ENCODE measurements at regions of chr4 and their contacts with region 1.

Region 1: DNA sequence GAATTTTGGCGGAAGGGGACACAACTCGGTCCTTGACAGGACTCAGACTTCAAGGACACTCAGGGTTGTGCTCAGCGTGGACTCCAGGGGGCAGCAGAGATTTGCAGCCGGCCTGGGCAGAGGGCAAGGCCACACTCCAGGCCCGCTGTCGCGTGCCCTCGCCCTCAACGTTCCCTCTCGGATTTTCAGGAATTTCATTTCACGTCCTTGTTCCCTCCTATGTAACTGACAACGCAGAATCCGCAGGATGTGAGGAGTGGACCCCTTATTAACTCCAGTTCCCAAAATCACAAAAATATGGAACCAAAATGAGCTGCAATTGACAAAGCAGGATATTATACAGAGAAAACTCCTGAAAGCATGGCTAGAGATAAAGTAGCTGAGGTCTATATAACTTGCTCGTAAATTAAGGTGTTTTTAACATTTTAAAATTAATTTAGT is 21.0 kb upstream of the DCTD start:
- DNase-seq: peak; percentile 58 to 66
- ATAC-seq: peak; percentile 98 to 100
- H3K4me3 ChIP-seq: no peak overlapping the region
- H3K27ac ChIP-seq: peak overlapping the region in 1 of 2 experiments; percentile 39; a peak in 2 of 6 replicates
- H3K4me1 ChIP-seq: no peaks in the 10 kb centered on the region
- CTCF ChIP-seq: peak; percentile 73
- EP300 ChIP-seq: no peak
- POLR2A ChIP-seq: no peak
- RAD21 ChIP-seq: peak; percentile 90 to 91

Region 2: DNA sequence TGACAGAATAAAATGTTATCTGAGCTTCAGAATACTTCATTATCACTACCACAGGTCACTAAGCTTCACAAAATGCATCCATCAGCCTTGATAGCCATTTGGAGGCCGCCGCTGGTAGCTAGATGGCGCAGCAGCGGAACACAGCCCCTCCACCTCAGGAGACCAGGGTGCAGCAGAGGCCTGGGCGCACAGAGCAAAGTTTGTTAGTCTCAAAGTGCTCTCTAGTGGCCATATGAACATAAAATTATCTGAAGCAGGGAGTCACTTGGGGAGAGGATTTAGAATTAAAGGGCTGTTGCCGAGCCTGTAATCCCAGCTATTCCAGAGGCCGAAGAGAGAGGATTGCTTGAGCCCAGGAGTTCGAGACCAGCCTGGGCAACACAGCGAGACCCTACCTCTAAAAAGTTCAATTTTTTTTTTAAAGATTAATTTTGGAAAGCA is 12.9 kb before region 1 on chr4:
- CTCF ChIA-PET with region 1: interaction called, 41 read pairs
- POLR2A ChIA-PET with region 1: no interaction called
- DNase-seq: peak; percentile 27 to 85
- ATAC-seq: peak; percentile 94 to 98
- H3K4me3 ChIP-seq: no peak overlapping the region
- H3K27ac ChIP-seq: no peak overlapping the region
- H3K4me1 ChIP-seq: 0 out of 3 replicates have a peak, but pooled peaks cover 8% of the 10 kb centered on the region
- CTCF ChIP-seq: peak; percentile 72
- EP300 ChIP-seq: no peak
- POLR2A ChIP-seq: no peak
- RAD21 ChIP-seq: peak; percentile 68 to 73

Region 3: GRCh38 chr4:182955411-182955810 is 17.2 kb after region 1 on chr4:
- CTCF ChIA-PET with region 1: interaction called, 10 read pairs
- POLR2A ChIA-PET with region 1: no interaction called
- DNase-seq: no peak
- ATAC-seq: no peak
- H3K4me3 ChIP-seq: no peak overlapping the region
- H3K27ac ChIP-seq: no peak overlapping the region
- H3K4me1 ChIP-seq: no peaks in the 10 kb centered on the region
- CTCF ChIP-seq: no peak
- EP300 ChIP-seq: no peak
- POLR2A ChIP-seq: no peak
- RAD21 ChIP-seq: no peak

Region 4: GRCh38 chr4:183074296-183074990 is 136.2 kb after region 1 on chr4:
- CTCF ChIA-PET with region 1: interaction called, 41 read pairs
- POLR2A ChIA-PET with region 1: no interaction called
- DNase-seq: peak in 1 of 2 experiments; percentile 18
- ATAC-seq: peak in 1 of 2 experiments; percentile 60; a peak in 3 of 6 replicates
- H3K4me3 ChIP-seq: no peak overlapping the region
- H3K27ac ChIP-seq: peak overlapping the region in 1 of 2 experiments; percentile 28; a peak in 1 of 6 replicates
- H3K4me1 ChIP-seq: peaks cover 12% of the 10 kb centered on the region; the same call in 2 of the 3 replicates
- CTCF ChIP-seq: no peak
- EP300 ChIP-seq: no peak
- POLR2A ChIP-seq: no peak
- RAD21 ChIP-seq: no peak

Region 5: DNA sequence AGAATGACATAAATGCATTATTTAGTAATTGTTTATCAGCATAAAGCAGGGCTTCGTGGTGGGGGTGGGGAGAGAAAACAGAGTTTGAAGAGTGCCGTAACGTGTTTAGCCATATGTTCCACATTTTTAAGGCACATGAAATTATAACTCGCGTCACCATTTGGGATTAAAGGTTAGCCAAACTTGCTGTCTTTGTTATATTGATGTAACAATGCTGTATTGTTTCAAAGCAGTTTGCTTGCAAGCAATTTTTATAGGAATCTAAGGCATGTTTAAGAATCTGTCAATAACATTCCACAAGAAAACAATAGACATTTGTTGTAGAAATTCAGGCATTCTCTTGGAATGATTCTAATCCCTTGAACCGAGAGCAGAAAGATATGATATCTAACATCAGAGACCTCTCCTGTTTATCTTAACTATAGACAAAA is 303.5 kb after region 1 on chr4:
- CTCF ChIA-PET with region 1: interaction called, 11 read pairs
- POLR2A ChIA-PET with region 1: no interaction called
- DNase-seq: no peak
- ATAC-seq: no peak
- H3K4me3 ChIP-seq: no peak overlapping the region
- H3K27ac ChIP-seq: no peak overlapping the region; a peak in 1 of 6 replicates
- H3K4me1 ChIP-seq: peaks cover 24% of the 10 kb centered on the region
- CTCF ChIP-seq: no peak
- EP300 ChIP-seq: no peak
- POLR2A ChIP-seq: no peak
- RAD21 ChIP-seq: no peak

Region 6: DNA sequence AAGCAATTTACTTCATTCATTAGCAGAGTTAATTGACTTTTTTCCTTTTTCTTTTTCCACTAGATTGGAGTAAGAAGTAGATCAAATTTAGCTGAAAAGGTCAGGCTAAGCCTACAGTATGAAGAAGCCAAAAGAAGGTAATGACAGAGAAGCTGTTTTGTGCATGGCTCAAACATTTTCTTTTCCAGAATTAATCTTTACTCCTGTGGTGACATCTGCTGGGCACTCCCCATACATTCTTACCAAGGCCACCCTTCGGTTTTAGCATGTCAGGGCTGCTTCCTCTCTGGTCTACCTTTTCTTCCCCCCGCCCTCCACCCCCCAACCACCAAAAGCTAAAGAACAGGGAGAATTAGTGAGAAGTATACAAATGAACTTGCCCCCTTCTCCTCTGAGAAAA is 311.6 kb after region 1 on chr4:
- CTCF ChIA-PET with region 1: interaction called, 45 read pairs
- POLR2A ChIA-PET with region 1: no interaction called
- DNase-seq: peak; percentile 11 to 39
- ATAC-seq: peak; percentile 54 to 86; a peak in 4 of 6 replicates
- H3K4me3 ChIP-seq: no peak overlapping the region
- H3K27ac ChIP-seq: no peak overlapping the region
- H3K4me1 ChIP-seq: no peaks in the 10 kb centered on the region
- CTCF ChIP-seq: peak; percentile 55
- EP300 ChIP-seq: no peak
- POLR2A ChIP-seq: no peak
- RAD21 ChIP-seq: peak; percentile 72 to 80

Region 7: DNA sequence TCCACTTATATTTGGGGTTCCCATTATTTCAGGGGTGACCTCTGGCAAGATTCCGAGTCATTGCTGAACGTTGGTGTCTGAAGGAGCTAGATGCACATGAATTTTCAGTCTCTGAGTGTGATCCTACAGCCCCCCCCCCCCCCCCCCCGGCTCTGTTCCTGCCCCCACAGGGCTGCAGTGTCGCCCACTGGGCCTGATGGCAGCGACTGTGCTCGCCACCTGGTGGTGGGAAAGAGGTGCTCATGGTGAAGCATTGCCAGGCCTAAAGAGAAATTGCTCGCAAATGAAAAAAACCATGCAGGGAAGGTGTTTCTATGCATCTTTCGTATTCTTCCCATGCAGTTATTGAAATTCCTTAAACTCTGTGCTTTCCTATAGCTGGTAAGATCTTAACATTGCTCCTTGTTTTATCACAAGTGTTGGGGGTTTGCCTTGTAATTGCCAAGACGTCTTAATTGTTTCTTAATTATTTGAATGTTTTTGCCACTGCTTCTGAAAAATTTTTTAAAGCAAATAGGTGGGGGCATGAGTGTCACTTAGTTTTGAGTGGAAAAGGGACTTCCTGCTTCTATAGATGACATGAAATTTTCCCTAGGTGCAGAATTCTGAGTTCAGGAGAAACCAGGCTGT is 318.6 kb after region 1 on chr4:
- CTCF ChIA-PET with region 1: interaction called, 86 read pairs
- POLR2A ChIA-PET with region 1: no interaction called
- DNase-seq: peak; percentile 36 to 50
- ATAC-seq: peak; percentile 85 to 92; a peak in 4 of 6 replicates
- H3K4me3 ChIP-seq: no peak overlapping the region
- H3K27ac ChIP-seq: no peak overlapping the region
- H3K4me1 ChIP-seq: peaks cover 20% of the 10 kb centered on the region; the same call in 2 of the 3 replicates
- CTCF ChIP-seq: peak; percentile 49
- EP300 ChIP-seq: no peak
- POLR2A ChIP-seq: no peak
- RAD21 ChIP-seq: peak; percentile 56 to 60

Measured in A549 (cell line).